T-cell (primary cell): ENCODE measurements at regions of chr3 and their contacts with region 1.

Region 1: GRCh38 chr3:141402476-141403171 is 34.3 kb downstream of the ZBTB38 start:
- DNase-seq: peak in 34 of 35 experiments; percentile 15 to 63 (median 42)
- ATAC-seq: peak; percentile 69 to 72 (median 70)
- H3K4me3 ChIP-seq: peak overlapping the region; percentile 77 to 82
- H3K4me3 Mint-ChIP-seq: peak overlapping the region; percentile 81 to 93 (median 91)
- H3K27ac ChIP-seq: peak overlapping the region; percentile 91
- H3K27ac Mint-ChIP-seq: peak overlapping the region; percentile 95 to 99
- H3K4me1 ChIP-seq: peaks cover 2 to 32% of the 10 kb centered on the region in 2 experiments
- H3K4me1 Mint-ChIP-seq: peaks cover 61 to 71% (median 71%) of the 10 kb centered on the region in 3 donors
- H3K27me3 ChIP-seq: no peaks in the 10 kb centered on the region
- H3K27me3 Mint-ChIP-seq: no peaks in the 10 kb centered on the region

Region 2: GRCh38 chr3:141353652-141354495 is 48.8 kb before region 1 on chr3:
- CTCF ChIA-PET with region 1: no interaction called
- POLR2A ChIA-PET with region 1: no interaction called
- DNase-seq: no peak
- ATAC-seq: no peak
- H3K4me3 ChIP-seq: no peak overlapping the region
- H3K4me3 Mint-ChIP-seq: no peak overlapping the region
- H3K27ac ChIP-seq: no peak overlapping the region
- H3K27ac Mint-ChIP-seq: no peak overlapping the region
- H3K4me1 ChIP-seq: no peaks in the 10 kb centered on the region
- H3K4me1 Mint-ChIP-seq: no peaks in the 10 kb centered on the region
- H3K27me3 ChIP-seq: no peaks in the 10 kb centered on the region
- H3K27me3 Mint-ChIP-seq: peaks cover 6 to 8% of the 10 kb centered on the region in 2 donors

Region 3: DNA sequence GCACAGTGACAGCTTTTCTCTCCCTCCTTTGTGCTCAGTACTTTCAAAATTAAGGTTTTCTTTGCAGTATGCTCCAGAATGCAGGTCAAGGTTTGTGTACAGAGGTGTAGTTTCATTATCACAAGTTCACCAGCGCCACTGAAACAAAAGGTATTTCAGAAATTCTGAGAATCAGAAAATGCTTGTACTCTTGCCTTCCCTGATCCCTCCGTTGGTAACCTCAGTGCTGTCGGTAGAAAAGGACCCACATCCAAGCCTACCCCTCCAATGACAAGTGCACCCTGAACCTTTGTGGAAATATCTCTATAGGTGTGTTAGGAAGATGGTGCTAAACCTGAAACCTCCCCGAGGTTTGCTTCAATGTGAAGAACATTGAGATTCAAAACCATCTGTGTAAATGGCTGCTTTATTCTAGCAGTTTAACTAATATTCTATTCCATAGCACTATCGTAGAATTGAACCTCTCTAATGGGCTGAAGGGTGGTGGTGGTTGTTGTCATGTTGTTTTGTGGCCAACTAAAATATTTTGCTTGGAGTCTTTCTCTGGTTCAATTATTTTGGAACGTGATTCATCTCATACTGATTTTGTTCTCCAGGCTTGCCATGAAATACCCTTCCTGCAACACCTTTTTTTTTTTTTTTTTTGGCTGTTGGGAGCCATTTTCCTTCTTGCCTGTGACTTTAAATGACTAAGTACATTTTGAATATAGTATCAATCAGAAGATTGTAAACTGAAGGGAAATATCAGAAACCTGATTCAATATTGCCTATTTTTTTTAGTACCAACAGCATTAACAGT is 13.6 kb before region 1 on chr3:
- CTCF ChIA-PET with region 1: interaction called in 1 of 2 experiments, 4 read pairs
- POLR2A ChIA-PET with region 1: interaction called in 1 of 2 experiments, 17 read pairs
- DNase-seq: no peak
- ATAC-seq: peak in 2 of 4 experiments; percentile 40 to 47
- H3K4me3 ChIP-seq: peak overlapping the region in 1 of 2 donors; percentile 27
- H3K4me3 Mint-ChIP-seq: peak overlapping the region; percentile 63 to 73 (median 64)
- H3K27ac ChIP-seq: peak overlapping the region; percentile 53
- H3K27ac Mint-ChIP-seq: peak overlapping the region; percentile 74 to 84
- H3K4me1 ChIP-seq: no peaks in the 10 kb centered on the region
- H3K4me1 Mint-ChIP-seq: peaks cover 0 to 14% (median 14%) of the 10 kb centered on the region in 3 donors
- H3K27me3 ChIP-seq: no peaks in the 10 kb centered on the region
- H3K27me3 Mint-ChIP-seq: no peaks in the 10 kb centered on the region